Common myeloid progenitor, CD34-positive (primary cell): ENCODE measurements at regions of chr6 and their contacts with region 1.

Region 1: DNA sequence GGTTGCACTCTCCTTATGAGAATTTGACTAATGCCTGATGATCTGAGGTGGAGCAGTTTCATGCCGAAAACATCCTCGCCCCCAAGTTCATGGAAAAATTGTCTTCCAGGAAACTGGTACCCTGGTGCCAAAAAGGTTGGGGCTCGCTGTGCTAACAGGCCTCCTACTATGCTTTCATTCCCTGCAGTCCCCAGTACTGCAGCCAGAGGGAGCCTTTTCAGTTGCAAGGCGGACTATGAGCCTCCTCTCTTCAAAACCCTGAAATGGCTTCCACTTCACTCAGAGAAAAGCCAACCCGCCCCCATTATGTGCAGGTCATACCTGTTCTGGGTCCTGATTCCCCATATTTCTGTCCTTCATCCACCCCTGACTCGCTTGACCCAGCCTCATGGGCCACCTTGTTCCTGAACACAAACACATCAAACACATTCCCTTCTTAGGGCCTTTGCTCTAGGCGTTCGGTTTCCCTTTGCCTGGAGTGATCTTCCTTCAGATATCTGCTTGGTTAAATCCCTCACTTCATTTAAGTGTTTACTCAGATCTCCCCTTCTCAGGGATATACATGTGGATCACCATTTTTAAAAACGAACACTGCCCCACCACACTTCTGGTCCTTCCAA is 173.7 kb downstream of the PHACTR1 start:
- DNase-seq: no peak
- H3K4me3 ChIP-seq: no peak overlapping the region
- H3K27ac ChIP-seq: no peak overlapping the region
- H3K4me1 ChIP-seq: peaks cover 0 to 4% (median 3%) of the 10 kb centered on the region in 4 experiments
- H3K27me3 ChIP-seq: no peaks in the 10 kb centered on the region

Region 2: GRCh38 chr6:12637960-12638641 is 252.2 kb before region 1 on chr6:
- CTCF ChIA-PET with region 1: interaction called, 37 read pairs
- POLR2A ChIA-PET with region 1: no interaction called
- DNase-seq: peak; percentile 71 to 87 (median 84)
- H3K4me3 ChIP-seq: no peak overlapping the region
- H3K27ac ChIP-seq: no peak overlapping the region
- H3K4me1 ChIP-seq: no peaks in the 10 kb centered on the region
- H3K27me3 ChIP-seq: no peaks in the 10 kb centered on the region

Region 3: GRCh38 chr6:12878741-12879140 is 11.5 kb before region 1 on chr6:
- CTCF ChIA-PET with region 1: interaction called, 13 read pairs
- POLR2A ChIA-PET with region 1: no interaction called
- DNase-seq: no peak
- H3K4me3 ChIP-seq: no peak overlapping the region
- H3K27ac ChIP-seq: no peak overlapping the region
- H3K4me1 ChIP-seq: no peaks in the 10 kb centered on the region
- H3K27me3 ChIP-seq: no peaks in the 10 kb centered on the region